B cell (primary cell): ENCODE measurements at regions of chr3 and their contacts with region 1.

Region 1: GRCh38 chr3:100260685-100261484 is at the start of gene TBC1D23:
- DNase-seq: peak; percentile 98
- ATAC-seq: peak; percentile 99
- H3K4me3 ChIP-seq: peak within 1 kb of the TSS; percentile 85 to 99 (median 93)
- H3K4me3 Mint-ChIP-seq: peak within 1 kb of the TSS; percentile 91
- H3K27ac ChIP-seq: peak within 1 kb of the TSS; percentile 93 to 95
- H3K27ac Mint-ChIP-seq: peak within 1 kb of the TSS; percentile 98
- H3K4me1 ChIP-seq: peaks cover 9 to 17% of the 10 kb centered on the region in 2 donors
- H3K4me1 Mint-ChIP-seq: peaks cover 45% of the 10 kb centered on the region
- H3K27me3 ChIP-seq: no peaks in the 10 kb centered on the region
- H3K27me3 Mint-ChIP-seq: no peaks in the 10 kb centered on the region
- CTCF ChIP-seq: no peak
- total RNA-seq, gene TBC1D23: 36.5 and 48.5 TPM in 2 replicates

Region 2: GRCh38 chr3:99817437-99818240 is 443.2 kb before region 1 on chr3 and contains the start of gene CMSS1:
- CTCF ChIA-PET with region 1: interaction called, 4 read pairs
- POLR2A ChIA-PET with region 1: interaction called, 8 read pairs
- intact Hi-C with region 1: loop called (anchors 1 kb)
- DNase-seq: peak; percentile 98
- ATAC-seq: peak; percentile 91
- H3K4me3 ChIP-seq: peak within 1 kb of the TSS; percentile 71 to 99 (median 89)
- H3K4me3 Mint-ChIP-seq: peak within 1 kb of the TSS; percentile 99
- H3K27ac ChIP-seq: peak within 1 kb of the TSS; percentile 85 to 91
- H3K27ac Mint-ChIP-seq: peak within 1 kb of the TSS; percentile 100
- H3K4me1 ChIP-seq: peaks cover 16 to 17% of the 10 kb centered on the region in 2 donors
- H3K4me1 Mint-ChIP-seq: peaks cover 39% of the 10 kb centered on the region
- H3K27me3 ChIP-seq: no peaks in the 10 kb centered on the region
- H3K27me3 Mint-ChIP-seq: no peaks in the 10 kb centered on the region
- CTCF ChIP-seq: no peak
- total RNA-seq, gene CMSS1: 22.0 and 22.8 TPM in 2 replicates

Region 3: GRCh38 chr3:99842826-99843589 is 417.9 kb before region 1 on chr3:
- CTCF ChIA-PET with region 1: interaction called, 26 read pairs
- POLR2A ChIA-PET with region 1: no interaction called
- intact Hi-C with region 1: no loop called
- DNase-seq: peak; percentile 39
- ATAC-seq: no peak
- H3K4me3 ChIP-seq: no peak overlapping the region
- H3K4me3 Mint-ChIP-seq: no peak overlapping the region
- H3K27ac ChIP-seq: no peak overlapping the region
- H3K27ac Mint-ChIP-seq: no peak overlapping the region
- H3K4me1 ChIP-seq: peaks cover 8 to 10% of the 10 kb centered on the region in 2 donors
- H3K4me1 Mint-ChIP-seq: peaks cover 14% of the 10 kb centered on the region
- H3K27me3 ChIP-seq: no peaks in the 10 kb centered on the region
- H3K27me3 Mint-ChIP-seq: no peaks in the 10 kb centered on the region
- CTCF ChIP-seq: peak; percentile 60

Region 4: DNA sequence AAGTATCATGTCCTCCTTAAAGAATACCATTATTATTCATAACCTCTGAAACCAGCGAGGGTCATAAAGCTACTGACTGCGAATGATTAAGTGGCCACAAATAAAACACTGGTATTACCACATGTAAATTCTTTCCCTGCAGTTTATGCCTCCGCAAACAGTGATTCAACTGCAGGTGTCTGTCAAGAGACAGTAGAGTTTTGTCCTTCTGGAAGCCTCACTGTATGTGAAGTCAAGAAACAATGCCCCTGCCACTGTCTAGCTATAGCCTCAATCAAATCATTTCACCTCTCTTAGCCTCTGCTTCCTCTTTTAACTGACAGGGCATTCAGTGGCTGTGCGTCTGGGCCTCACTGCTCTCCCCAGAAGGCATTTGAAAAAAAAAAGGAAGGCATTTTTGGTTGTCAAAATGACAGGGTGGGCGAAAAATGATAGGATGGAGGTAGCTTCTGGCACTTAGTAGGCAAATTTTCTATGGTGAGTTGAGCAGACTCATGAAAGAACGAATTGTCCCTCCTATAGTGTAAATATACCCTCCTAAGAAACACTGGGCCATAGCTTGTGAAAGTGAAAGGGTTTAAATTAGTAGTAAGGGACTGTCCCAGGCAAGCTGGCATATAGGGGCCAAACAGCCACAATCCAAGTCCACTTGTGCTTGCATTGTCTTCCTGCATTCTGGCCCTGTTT is 213.3 kb before region 1 on chr3:
- CTCF ChIA-PET with region 1: interaction called, 11 read pairs
- POLR2A ChIA-PET with region 1: no interaction called
- intact Hi-C with region 1: loop called (anchors 1 kb)
- DNase-seq: peak; percentile 82
- ATAC-seq: peak; percentile 67
- H3K4me3 ChIP-seq: peak overlapping the region; percentile 16 to 47 (median 34)
- H3K4me3 Mint-ChIP-seq: peak overlapping the region; percentile 89
- H3K27ac ChIP-seq: peak overlapping the region; percentile 75 to 82
- H3K27ac Mint-ChIP-seq: peak overlapping the region; percentile 97
- H3K4me1 ChIP-seq: peaks cover 59 to 60% of the 10 kb centered on the region in 2 donors
- H3K4me1 Mint-ChIP-seq: peaks cover 63% of the 10 kb centered on the region
- H3K27me3 ChIP-seq: no peaks in the 10 kb centered on the region
- H3K27me3 Mint-ChIP-seq: no peaks in the 10 kb centered on the region
- CTCF ChIP-seq: no peak

Region 5: DNA sequence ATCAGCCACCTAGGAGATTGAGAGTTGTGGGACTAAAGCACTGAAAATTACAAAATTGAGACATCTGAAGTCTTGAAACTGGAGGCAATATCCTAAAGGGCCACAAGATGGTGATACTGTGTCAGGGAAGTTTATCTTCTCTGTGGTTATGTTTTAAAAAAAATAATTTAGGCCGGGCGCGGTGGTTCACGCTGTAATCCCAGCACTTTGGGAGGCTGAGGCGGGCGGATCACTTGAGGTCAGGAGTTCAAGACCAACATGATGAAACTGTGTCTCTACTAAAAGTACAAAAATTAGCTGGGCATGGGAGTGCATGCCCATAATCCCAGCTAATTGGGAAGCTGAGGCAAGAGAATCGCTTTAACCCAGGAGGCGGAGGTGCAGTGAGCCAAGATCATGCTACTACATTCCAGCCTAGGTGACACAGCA is 55.8 kb after region 1 on chr3:
- CTCF ChIA-PET with region 1: no interaction called
- POLR2A ChIA-PET with region 1: no interaction called
- intact Hi-C with region 1: no loop called
- DNase-seq: peak; percentile 62
- ATAC-seq: peak; percentile 60
- H3K4me3 ChIP-seq: no peak overlapping the region
- H3K4me3 Mint-ChIP-seq: no peak overlapping the region
- H3K27ac ChIP-seq: no peak overlapping the region
- H3K27ac Mint-ChIP-seq: no peak overlapping the region
- H3K4me1 ChIP-seq: peaks cover 0 to 5% of the 10 kb centered on the region in 2 donors
- H3K4me1 Mint-ChIP-seq: no peaks in the 10 kb centered on the region
- H3K27me3 ChIP-seq: no peaks in the 10 kb centered on the region
- H3K27me3 Mint-ChIP-seq: no peaks in the 10 kb centered on the region
- CTCF ChIP-seq: peak; percentile 75

Region 6: DNA sequence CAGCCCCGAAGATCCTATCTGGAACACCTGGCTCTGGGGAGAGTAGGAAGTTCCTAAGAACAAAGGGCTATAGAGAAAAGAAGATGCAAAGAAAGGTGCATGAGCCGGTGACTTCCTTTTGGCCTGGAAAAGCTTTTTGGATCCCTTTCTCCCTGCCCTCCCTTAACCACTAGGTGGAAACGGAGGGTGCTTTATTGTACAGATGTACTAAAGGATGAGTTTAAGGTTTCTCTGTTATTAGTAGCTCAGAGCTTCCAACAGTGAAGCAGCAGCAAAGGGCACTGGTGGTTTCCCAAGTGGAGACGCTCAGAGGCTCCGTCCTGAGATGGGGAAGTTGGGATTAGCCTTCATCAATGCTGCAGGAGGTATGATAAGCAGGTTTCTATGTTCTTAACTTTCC is 342.6 kb after region 1 on chr3:
- CTCF ChIA-PET with region 1: no interaction called
- POLR2A ChIA-PET with region 1: no interaction called
- intact Hi-C with region 1: loop called (anchors 2 kb)
- DNase-seq: no peak
- ATAC-seq: peak; percentile 40
- H3K4me3 ChIP-seq: peak overlapping the region; percentile 31 to 59 (median 46)
- H3K4me3 Mint-ChIP-seq: peak overlapping the region; percentile 87
- H3K27ac ChIP-seq: peak overlapping the region; percentile 72 to 80
- H3K27ac Mint-ChIP-seq: peak overlapping the region; percentile 93
- H3K4me1 ChIP-seq: peaks cover 17 to 26% of the 10 kb centered on the region in 2 donors
- H3K4me1 Mint-ChIP-seq: peaks cover 27% of the 10 kb centered on the region
- H3K27me3 ChIP-seq: peaks cover 0 to 9% (median 0%) of the 10 kb centered on the region in 4 experiments
- H3K27me3 Mint-ChIP-seq: peaks cover 8% of the 10 kb centered on the region
- CTCF ChIP-seq: peak; percentile 25

Region 7: GRCh38 chr3:101724329-101725193 is 1463.7 kb after region 1 on chr3 and contains the start of gene CEP97:
- CTCF ChIA-PET with region 1: no interaction called
- POLR2A ChIA-PET with region 1: no interaction called
- intact Hi-C with region 1: loop called (anchors 2 kb)
- DNase-seq: peak; percentile 91
- ATAC-seq: peak; percentile 93
- H3K4me3 ChIP-seq: peak within 1 kb of the TSS; percentile 77 to 99 (median 84)
- H3K4me3 Mint-ChIP-seq: peak within 1 kb of the TSS; percentile 100
- H3K27ac ChIP-seq: peak within 1 kb of the TSS; percentile 70 to 74
- H3K27ac Mint-ChIP-seq: peak within 1 kb of the TSS; percentile 99
- H3K4me1 ChIP-seq: peaks cover 30 to 34% of the 10 kb centered on the region in 2 donors
- H3K4me1 Mint-ChIP-seq: peaks cover 37% of the 10 kb centered on the region
- H3K27me3 ChIP-seq: no peaks in the 10 kb centered on the region
- H3K27me3 Mint-ChIP-seq: no peaks in the 10 kb centered on the region
- CTCF ChIP-seq: no peak
- total RNA-seq, gene CEP97: 15.0 and 15.4 TPM in 2 replicates